B cell (primary cell): ENCODE measurements at regions of chr17 and their contacts with region 1.

Region 1: DNA sequence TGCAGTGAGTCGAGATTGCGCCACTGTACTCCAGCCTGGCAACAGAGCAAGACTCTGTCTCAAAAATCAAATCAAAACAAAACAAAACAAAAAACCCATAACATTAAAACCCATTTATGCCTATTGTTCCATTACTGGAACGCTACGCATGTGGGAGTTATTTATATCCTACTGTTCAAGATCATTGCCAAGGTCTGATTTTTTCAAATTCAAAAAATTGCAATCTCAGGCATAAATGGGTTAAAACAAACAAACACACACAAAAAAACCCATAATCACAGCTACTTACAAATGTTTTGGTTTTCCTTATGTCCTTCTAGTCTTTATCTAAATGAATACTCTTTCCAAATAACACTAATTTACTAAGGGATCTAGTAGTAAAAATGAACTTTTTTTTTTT is 17.8 kb downstream of the GJC1 start:
- DNase-seq: no peak
- ATAC-seq: no peak
- H3K4me3 ChIP-seq: no peak overlapping the region
- H3K4me3 Mint-ChIP-seq: no peak overlapping the region
- H3K27ac ChIP-seq: no peak overlapping the region
- H3K27ac Mint-ChIP-seq: no peak overlapping the region
- H3K4me1 ChIP-seq: no peaks in the 10 kb centered on the region
- H3K4me1 Mint-ChIP-seq: no peaks in the 10 kb centered on the region
- H3K27me3 ChIP-seq: no peaks in the 10 kb centered on the region
- H3K27me3 Mint-ChIP-seq: peaks cover 3% of the 10 kb centered on the region
- CTCF ChIP-seq: no peak

Region 2: DNA sequence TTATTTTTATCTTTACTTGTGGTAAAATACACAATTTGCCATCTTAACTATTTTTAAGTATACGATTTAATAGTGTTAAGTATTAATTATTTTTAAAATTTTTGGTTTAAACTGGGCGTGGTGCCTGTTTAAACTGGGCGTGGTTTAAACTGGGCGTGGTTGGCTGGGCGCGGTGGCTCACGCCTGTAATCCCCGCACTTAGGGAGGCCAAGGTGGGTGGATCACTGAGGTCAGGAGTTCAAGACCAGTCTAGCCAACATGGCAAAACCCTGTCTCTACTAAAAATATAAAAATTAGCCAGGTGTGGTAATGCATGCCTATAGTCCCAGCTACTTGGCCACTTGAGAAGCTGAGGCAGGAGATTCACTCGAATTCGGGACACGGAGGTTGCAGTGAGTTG is 118.7 kb before region 1 on chr17:
- CTCF ChIA-PET with region 1: no interaction called
- POLR2A ChIA-PET with region 1: no interaction called
- intact Hi-C with region 1: no loop called
- DNase-seq: no peak
- ATAC-seq: no peak
- H3K4me3 ChIP-seq: no peak overlapping the region
- H3K4me3 Mint-ChIP-seq: no peak overlapping the region
- H3K27ac ChIP-seq: no peak overlapping the region
- H3K27ac Mint-ChIP-seq: no peak overlapping the region
- H3K4me1 ChIP-seq: peaks cover 10 to 14% of the 10 kb centered on the region in 2 donors
- H3K4me1 Mint-ChIP-seq: peaks cover 17% of the 10 kb centered on the region
- H3K27me3 ChIP-seq: no peaks in the 10 kb centered on the region
- H3K27me3 Mint-ChIP-seq: no peaks in the 10 kb centered on the region
- CTCF ChIP-seq: no peak

Region 3: GRCh38 chr17:44848961-44849489 is 36.8 kb after region 1 on chr17:
- CTCF ChIA-PET with region 1: no interaction called
- POLR2A ChIA-PET with region 1: interaction called, 10 read pairs
- intact Hi-C with region 1: no loop called
- DNase-seq: no peak
- ATAC-seq: no peak
- H3K4me3 ChIP-seq: no peak overlapping the region
- H3K4me3 Mint-ChIP-seq: no peak overlapping the region
- H3K27ac ChIP-seq: no peak overlapping the region
- H3K27ac Mint-ChIP-seq: no peak overlapping the region
- H3K4me1 ChIP-seq: no peaks in the 10 kb centered on the region
- H3K4me1 Mint-ChIP-seq: peaks cover 8% of the 10 kb centered on the region
- H3K27me3 ChIP-seq: no peaks in the 10 kb centered on the region
- H3K27me3 Mint-ChIP-seq: no peaks in the 10 kb centered on the region
- CTCF ChIP-seq: no peak

Region 4: GRCh38 chr17:44919885-44920564 is 107.8 kb after region 1 on chr17:
- CTCF ChIA-PET with region 1: no interaction called
- POLR2A ChIA-PET with region 1: no interaction called
- intact Hi-C with region 1: no loop called
- DNase-seq: peak; percentile 73
- ATAC-seq: peak; percentile 88
- H3K4me3 ChIP-seq: no peak overlapping the region
- H3K4me3 Mint-ChIP-seq: no peak overlapping the region
- H3K27ac ChIP-seq: no peak overlapping the region
- H3K27ac Mint-ChIP-seq: no peak overlapping the region
- H3K4me1 ChIP-seq: peaks cover 10 to 13% of the 10 kb centered on the region in 2 donors
- H3K4me1 Mint-ChIP-seq: peaks cover 12% of the 10 kb centered on the region
- H3K27me3 ChIP-seq: peaks cover 0 to 33% (median 6%) of the 10 kb centered on the region in 4 experiments
- H3K27me3 Mint-ChIP-seq: peaks cover 8% of the 10 kb centered on the region
- CTCF ChIP-seq: peak; percentile 61

Region 5: DNA sequence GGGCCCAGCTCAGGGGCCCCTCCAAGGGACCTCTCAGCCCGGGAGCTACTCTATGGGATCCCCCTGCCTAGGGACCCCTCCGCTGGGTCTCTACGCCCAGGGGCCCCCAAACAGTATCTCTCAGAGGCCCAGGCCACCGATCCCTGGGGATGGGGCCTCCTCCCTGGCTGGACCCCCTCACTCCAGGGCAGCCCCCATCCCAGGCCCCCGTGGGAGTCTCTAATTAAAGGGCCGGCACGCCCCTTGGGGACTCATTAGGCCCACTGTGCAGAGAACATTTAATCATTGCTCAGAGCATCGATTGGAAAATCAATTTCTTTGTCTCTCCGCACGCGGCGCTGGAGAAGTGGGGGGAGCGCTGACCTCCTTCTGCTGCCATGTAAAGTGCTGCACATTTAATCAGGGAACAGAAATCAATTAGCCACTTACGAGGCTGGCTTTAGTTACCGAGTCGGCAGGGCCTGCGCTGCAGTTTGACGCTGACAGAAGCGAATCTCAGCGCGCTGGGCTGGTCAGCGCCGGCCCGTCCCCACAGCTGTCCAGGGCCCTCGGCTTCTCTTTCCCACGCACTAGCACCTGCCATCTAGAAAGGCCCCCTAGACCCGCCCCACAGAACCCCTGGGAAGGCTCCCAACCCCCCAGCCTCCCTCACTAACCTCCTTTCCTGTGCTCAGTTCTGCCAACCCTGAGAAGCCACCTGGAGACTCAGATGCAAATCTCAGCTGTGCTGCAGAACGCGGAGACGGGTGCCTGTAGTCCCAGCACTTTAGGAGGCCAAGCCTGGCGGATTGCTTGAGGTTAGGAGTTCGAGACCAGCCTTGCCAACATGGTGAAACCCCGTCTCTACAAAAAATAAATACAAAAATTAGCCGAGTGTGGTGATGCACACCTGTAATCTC is 176.0 kb after region 1 on chr17:
- CTCF ChIA-PET with region 1: no interaction called
- POLR2A ChIA-PET with region 1: no interaction called
- intact Hi-C with region 1: no loop called
- DNase-seq: no peak
- ATAC-seq: no peak
- H3K4me3 ChIP-seq: no peak overlapping the region
- H3K4me3 Mint-ChIP-seq: no peak overlapping the region
- H3K27ac ChIP-seq: no peak overlapping the region
- H3K27ac Mint-ChIP-seq: no peak overlapping the region
- H3K4me1 ChIP-seq: peaks cover 5 to 10% of the 10 kb centered on the region in 2 donors
- H3K4me1 Mint-ChIP-seq: peaks cover 6% of the 10 kb centered on the region
- H3K27me3 ChIP-seq: peaks cover 0 to 46% (median 16%) of the 10 kb centered on the region in 4 experiments
- H3K27me3 Mint-ChIP-seq: peaks cover 35% of the 10 kb centered on the region
- CTCF ChIP-seq: no peak